A549 (cell line): ENCODE measurements at regions of chr20 and their contacts with region 1.

Region 1: GRCh38 chr20:50992733-50993457 is 30.0 kb downstream of the KCNG1 start:
- DNase-seq: peak; percentile 89 to 90
- ATAC-seq: peak; percentile 71 to 98
- H3K4me3 ChIP-seq: no peak overlapping the region
- H3K27ac ChIP-seq: peak overlapping the region in 1 of 2 experiments; percentile 8; a peak in 2 of 6 replicates
- H3K4me1 ChIP-seq: peaks cover 13% of the 10 kb centered on the region
- CTCF ChIP-seq: peak; percentile 67
- EP300 ChIP-seq: no peak
- POLR2A ChIP-seq: no peak; the same call in 1 of the 2 replicates
- RAD21 ChIP-seq: peak; percentile 62 to 76

Region 2: GRCh38 chr20:51014797-51015722 is 22.2 kb after region 1 on chr20:
- CTCF ChIA-PET with region 1: interaction called, 13 read pairs
- POLR2A ChIA-PET with region 1: no interaction called
- DNase-seq: peak; percentile 59 to 84
- ATAC-seq: peak; percentile 67 to 85; a peak in 5 of 6 replicates
- H3K4me3 ChIP-seq: no peak overlapping the region
- H3K27ac ChIP-seq: no peak overlapping the region
- H3K4me1 ChIP-seq: no peaks in the 10 kb centered on the region
- CTCF ChIP-seq: peak; percentile 65
- EP300 ChIP-seq: no peak
- POLR2A ChIP-seq: no peak
- RAD21 ChIP-seq: peak; percentile 43 to 59; a peak in 4 of 5 replicates

Region 3: GRCh38 chr20:51026269-51026668 is 33.4 kb after region 1 on chr20:
- CTCF ChIA-PET with region 1: no interaction called
- POLR2A ChIA-PET with region 1: no interaction called
- DNase-seq: no peak
- ATAC-seq: no peak
- H3K4me3 ChIP-seq: no peak overlapping the region
- H3K27ac ChIP-seq: no peak overlapping the region
- H3K4me1 ChIP-seq: peaks cover 12% of the 10 kb centered on the region; the same call in 1 of the 3 replicates
- CTCF ChIP-seq: no peak
- EP300 ChIP-seq: no peak
- POLR2A ChIP-seq: no peak
- RAD21 ChIP-seq: no peak

Region 4: GRCh38 chr20:51042654-51043247 is 49.9 kb after region 1 on chr20:
- CTCF ChIA-PET with region 1: no interaction called
- POLR2A ChIA-PET with region 1: no interaction called
- DNase-seq: no peak
- ATAC-seq: peak; percentile 62 to 82; a peak in 3 of 6 replicates
- H3K4me3 ChIP-seq: no peak overlapping the region
- H3K27ac ChIP-seq: no peak overlapping the region; a peak in 1 of 6 replicates
- H3K4me1 ChIP-seq: no peaks in the 10 kb centered on the region
- CTCF ChIP-seq: no peak
- EP300 ChIP-seq: no peak
- POLR2A ChIP-seq: no peak
- RAD21 ChIP-seq: no peak

Region 5: GRCh38 chr20:51311606-51312495 is 319.0 kb after region 1 on chr20:
- CTCF ChIA-PET with region 1: interaction called, 565 read pairs
- POLR2A ChIA-PET with region 1: interaction called, 5 read pairs
- DNase-seq: no peak
- ATAC-seq: no peak
- H3K4me3 ChIP-seq: no peak overlapping the region
- H3K27ac ChIP-seq: no peak overlapping the region
- H3K4me1 ChIP-seq: 0 out of 3 replicates have a peak, but pooled peaks cover 3% of the 10 kb centered on the region
- CTCF ChIP-seq: no peak
- EP300 ChIP-seq: no peak
- POLR2A ChIP-seq: no peak
- RAD21 ChIP-seq: no peak

Region 6: GRCh38 chr20:51326201-51326819 is 333.4 kb after region 1 on chr20:
- CTCF ChIA-PET with region 1: interaction called, 60 read pairs
- POLR2A ChIA-PET with region 1: no interaction called
- DNase-seq: peak; percentile 66 to 73
- ATAC-seq: peak; percentile 55 to 85; a peak in 3 of 6 replicates
- H3K4me3 ChIP-seq: no peak overlapping the region
- H3K27ac ChIP-seq: no peak overlapping the region
- H3K4me1 ChIP-seq: no peaks in the 10 kb centered on the region
- CTCF ChIP-seq: peak; percentile 54
- EP300 ChIP-seq: no peak
- POLR2A ChIP-seq: no peak
- RAD21 ChIP-seq: peak; percentile 38 to 42; a peak in 3 of 5 replicates